PC-9 (cell line): ENCODE measurements at regions of chr13 and their contacts with region 1.

Region 1: DNA sequence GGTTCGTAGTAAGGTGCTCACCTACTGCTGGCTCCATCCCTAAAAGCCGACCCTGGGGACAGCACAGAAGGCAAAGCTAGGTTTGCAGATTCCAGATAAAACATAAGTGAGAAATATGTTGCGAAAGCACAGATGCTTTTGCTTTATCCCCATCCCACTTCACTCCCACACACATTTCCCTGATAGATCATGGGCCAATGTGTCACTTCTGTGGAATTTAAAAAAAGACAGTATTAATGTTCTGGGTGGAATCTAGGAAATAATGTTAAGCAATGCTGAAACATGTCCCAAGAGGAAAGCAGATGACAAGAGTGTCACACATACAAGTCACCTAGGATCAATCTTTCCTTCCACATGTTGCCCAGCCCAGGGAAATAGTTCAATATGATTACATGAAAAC is 661.0 kb upstream of the MIR17HG start:
- DNase-seq: peak in 1 of 2 experiments; percentile 1
- H3K4me3 ChIP-seq: no peak overlapping the region
- H3K27ac ChIP-seq: no peak overlapping the region
- H3K4me1 ChIP-seq: no peaks in the 10 kb centered on the region
- H3K27me3 ChIP-seq: no peaks in the 10 kb centered on the region
- CTCF ChIP-seq: no peak

Region 2: DNA sequence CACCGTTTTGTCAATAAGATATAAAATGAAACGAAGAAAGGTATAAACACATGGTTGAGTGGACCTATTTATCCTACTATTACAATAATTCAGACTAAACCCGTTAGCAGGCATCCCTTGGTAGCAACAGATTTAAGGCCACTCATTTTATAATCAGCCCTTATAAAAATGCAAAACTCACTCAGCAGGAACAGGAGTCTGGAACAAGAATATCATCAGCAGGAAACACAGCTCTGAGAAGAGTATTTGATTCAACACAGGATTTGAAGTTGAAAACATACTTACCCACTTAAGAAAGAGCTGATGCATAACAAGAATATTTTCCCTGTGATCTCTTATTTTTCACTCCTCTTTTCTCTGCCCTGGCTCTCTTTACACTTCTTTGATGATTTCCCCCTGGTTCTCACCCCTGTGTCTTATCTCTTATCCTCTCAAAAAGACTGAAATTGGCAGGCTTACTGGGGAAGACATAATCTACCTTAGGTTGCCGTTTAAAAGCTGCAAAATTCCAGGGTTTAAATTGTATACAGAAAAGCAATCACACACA is 1292.6 kb before region 1 on chr13:
- CTCF ChIA-PET with region 1: no interaction called
- POLR2A ChIA-PET with region 1: interaction called, 12 read pairs
- intact Hi-C with region 1: no loop called
- DNase-seq: no peak
- H3K4me3 ChIP-seq: no peak overlapping the region
- H3K27ac ChIP-seq: no peak overlapping the region
- H3K4me1 ChIP-seq: no peaks in the 10 kb centered on the region
- H3K27me3 ChIP-seq: no peaks in the 10 kb centered on the region
- CTCF ChIP-seq: no peak

Region 3: DNA sequence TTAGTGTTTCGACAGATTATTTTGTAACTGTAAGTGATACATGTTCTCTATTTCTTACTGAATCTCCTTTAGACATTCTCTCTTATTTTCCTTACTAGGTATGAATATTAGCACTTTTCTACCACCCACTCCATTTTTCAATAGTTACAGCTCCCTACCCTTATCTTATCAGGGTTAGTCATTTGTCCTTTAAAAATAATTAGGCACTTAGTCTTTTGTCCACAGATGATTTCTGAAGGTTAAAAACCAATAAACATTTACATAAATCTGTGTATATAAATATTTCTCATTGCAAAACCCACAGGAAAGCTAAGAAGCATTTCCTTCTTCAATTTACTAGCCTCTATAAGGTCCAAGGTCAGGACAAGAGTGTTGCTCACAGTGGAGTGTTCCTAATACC is 36.9 kb after region 1 on chr13:
- CTCF ChIA-PET with region 1: no interaction called
- POLR2A ChIA-PET with region 1: no interaction called
- intact Hi-C with region 1: no loop called
- DNase-seq: no peak
- H3K4me3 ChIP-seq: no peak overlapping the region
- H3K27ac ChIP-seq: no peak overlapping the region
- H3K4me1 ChIP-seq: no peaks in the 10 kb centered on the region
- H3K27me3 ChIP-seq: no peaks in the 10 kb centered on the region
- CTCF ChIP-seq: no peak